Activated CD4-positive, alpha-beta T cell treated with anti-CD3 and anti-CD28 coated beads, Interleukin-2, amount 10 ng/mL, durations not matched to agents 24 days and 14 days (primary cell): ENCODE measurements at regions of chr9 and their contacts with region 1.

Region 1: GRCh38 chr9:25691786-25692185 is 13.5 kb upstream of the TUSC1 start:
- DNase-seq: no peak
- H3K4me3 Mint-ChIP-seq: no peak overlapping the region
- H3K27ac Mint-ChIP-seq: no peak overlapping the region
- H3K4me1 Mint-ChIP-seq: no peaks in the 10 kb centered on the region
- H3K27me3 Mint-ChIP-seq: no peaks in the 10 kb centered on the region

Region 2: DNA sequence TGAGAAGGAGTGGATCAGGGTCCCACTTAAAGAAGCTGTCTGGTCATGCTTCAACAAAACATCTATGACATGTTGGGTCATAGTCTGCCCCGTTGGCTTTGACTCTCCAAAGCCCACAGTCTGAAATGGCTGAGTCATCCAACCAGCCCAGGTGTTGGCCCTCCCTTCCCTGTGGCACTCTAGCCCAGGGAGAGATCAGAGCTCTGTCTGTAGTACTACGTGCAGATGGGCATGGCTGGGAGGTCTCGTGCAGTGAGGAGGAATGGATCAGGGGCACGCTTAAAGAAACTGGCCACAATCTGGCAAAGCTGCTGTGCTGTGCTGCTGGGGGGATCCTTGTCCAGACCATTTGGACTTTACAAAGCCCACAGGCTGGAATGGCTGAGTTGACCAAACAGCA is 219.6 kb before region 1 on chr9:
- intact Hi-C with region 1: no loop called
- DNase-seq: no peak
- H3K4me3 Mint-ChIP-seq: no peak overlapping the region
- H3K27ac Mint-ChIP-seq: no peak overlapping the region
- H3K4me1 Mint-ChIP-seq: no peaks in the 10 kb centered on the region
- H3K27me3 Mint-ChIP-seq: no peaks in the 10 kb centered on the region

Region 3: DNA sequence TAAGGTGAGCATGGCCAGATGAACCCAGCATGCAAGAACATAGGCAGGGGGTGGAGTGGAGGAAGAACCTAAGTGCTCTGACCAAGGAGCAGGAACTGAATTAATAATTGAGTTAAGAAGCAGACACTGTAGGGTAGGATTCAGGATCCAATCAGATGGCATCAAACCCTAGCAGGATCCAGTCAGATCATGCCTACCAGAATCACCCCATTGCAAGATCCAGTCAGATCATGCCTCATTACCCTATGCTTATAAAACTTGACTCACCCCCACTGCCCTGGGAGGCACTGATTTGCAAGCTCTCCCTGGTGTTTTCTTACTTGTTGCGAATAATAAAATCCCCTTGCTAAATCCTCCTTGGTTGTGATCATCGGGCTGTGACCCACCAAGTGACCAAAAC is 33.2 kb before region 1 on chr9:
- intact Hi-C with region 1: no loop called
- DNase-seq: no peak
- H3K4me3 Mint-ChIP-seq: no peak overlapping the region
- H3K27ac Mint-ChIP-seq: no peak overlapping the region
- H3K4me1 Mint-ChIP-seq: no peaks in the 10 kb centered on the region
- H3K27me3 Mint-ChIP-seq: no peaks in the 10 kb centered on the region

Region 4: DNA sequence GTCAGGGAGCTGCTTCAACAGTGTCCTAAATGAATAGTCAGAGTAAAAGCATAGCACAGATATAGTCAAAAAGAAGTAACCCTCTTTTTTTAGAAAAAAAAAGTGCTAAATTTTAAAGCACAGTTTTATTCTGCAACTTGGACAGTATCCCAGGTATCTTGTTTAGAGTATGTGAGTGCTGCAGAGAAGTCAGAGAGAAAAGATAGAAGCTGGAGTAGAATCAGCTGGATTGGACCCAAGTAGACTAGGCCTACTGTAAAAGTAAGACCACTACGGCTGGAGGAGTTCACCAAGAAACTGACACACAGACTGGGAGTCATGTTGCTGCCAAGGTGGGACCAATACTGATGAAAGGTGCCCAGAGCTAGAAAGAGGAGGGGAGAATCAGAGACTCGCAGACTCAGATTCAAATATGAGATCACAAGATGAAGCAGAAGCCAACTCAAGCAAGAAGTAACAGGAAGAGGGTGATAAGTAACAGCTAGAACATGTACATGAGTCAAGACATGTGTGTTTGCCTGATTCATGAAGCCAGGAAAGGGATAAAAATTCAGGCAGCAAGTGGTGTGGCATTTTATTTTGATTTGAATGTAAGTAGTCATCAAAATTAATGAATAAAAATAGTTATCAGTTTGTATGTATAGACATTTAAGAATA is 12.0 kb after region 1 on chr9:
- intact Hi-C with region 1: no loop called
- DNase-seq: no peak
- H3K4me3 Mint-ChIP-seq: no peak overlapping the region
- H3K27ac Mint-ChIP-seq: no peak overlapping the region
- H3K4me1 Mint-ChIP-seq: no peaks in the 10 kb centered on the region
- H3K27me3 Mint-ChIP-seq: no peaks in the 10 kb centered on the region

Region 5: GRCh38 chr9:25752398-25752797 is 60.6 kb after region 1 on chr9:
- intact Hi-C with region 1: loop called (anchors 10 kb)
- DNase-seq: no peak
- H3K4me3 Mint-ChIP-seq: no peak overlapping the region
- H3K27ac Mint-ChIP-seq: no peak overlapping the region
- H3K4me1 Mint-ChIP-seq: no peaks in the 10 kb centered on the region
- H3K27me3 Mint-ChIP-seq: no peaks in the 10 kb centered on the region